PC-3 (cell line): ENCODE measurements at regions of chr1 and their contacts with region 1.

Region 1: DNA sequence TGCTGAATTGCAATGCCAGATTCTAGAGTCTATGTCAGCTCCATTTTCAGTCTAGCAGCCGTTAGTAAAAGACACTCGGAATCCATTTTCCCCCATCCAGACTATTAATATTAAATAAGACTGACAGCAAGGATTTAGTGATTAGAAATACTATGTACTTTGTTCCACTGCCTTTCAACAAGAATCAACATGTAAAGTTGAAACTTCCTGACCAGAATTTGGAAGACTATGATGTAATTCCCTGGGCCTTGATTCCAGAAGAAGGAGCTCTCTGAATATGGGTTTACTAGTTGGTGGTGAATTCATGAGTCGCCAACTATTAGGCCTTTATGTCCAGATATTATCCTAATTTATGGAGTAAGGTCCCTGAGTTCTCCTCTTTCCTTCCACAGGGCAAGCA is 24.8 kb downstream of the KDM1A start:
- DNase-seq: no peak
- ATAC-seq: no peak
- H3K4me3 ChIP-seq: no peak overlapping the region
- H3K27ac ChIP-seq: no peak overlapping the region
- H3K4me1 ChIP-seq: no peaks in the 10 kb centered on the region
- H3K27me3 ChIP-seq: no peaks in the 10 kb centered on the region
- CTCF ChIP-seq: no peak

Region 2: GRCh38 chr1:23019094-23019862 is 24.8 kb before region 1 on chr1 and contains the start of gene KDM1A:
- CTCF ChIA-PET with region 1: no interaction called
- POLR2A ChIA-PET with region 1: no interaction called
- intact Hi-C with region 1: loop called (anchors 2 kb)
- DNase-seq: peak; percentile 98
- ATAC-seq: peak; percentile 95
- H3K4me3 ChIP-seq: peak within 1 kb of the TSS; percentile 94
- H3K27ac ChIP-seq: peak within 1 kb of the TSS; percentile 79
- H3K4me1 ChIP-seq: peaks cover 24% of the 10 kb centered on the region; the same call in 1 of the 2 replicates
- H3K27me3 ChIP-seq: no peaks in the 10 kb centered on the region
- CTCF ChIP-seq: no peak
- total RNA-seq, gene KDM1A: 186 and 229 TPM in 2 replicates

Region 3: DNA sequence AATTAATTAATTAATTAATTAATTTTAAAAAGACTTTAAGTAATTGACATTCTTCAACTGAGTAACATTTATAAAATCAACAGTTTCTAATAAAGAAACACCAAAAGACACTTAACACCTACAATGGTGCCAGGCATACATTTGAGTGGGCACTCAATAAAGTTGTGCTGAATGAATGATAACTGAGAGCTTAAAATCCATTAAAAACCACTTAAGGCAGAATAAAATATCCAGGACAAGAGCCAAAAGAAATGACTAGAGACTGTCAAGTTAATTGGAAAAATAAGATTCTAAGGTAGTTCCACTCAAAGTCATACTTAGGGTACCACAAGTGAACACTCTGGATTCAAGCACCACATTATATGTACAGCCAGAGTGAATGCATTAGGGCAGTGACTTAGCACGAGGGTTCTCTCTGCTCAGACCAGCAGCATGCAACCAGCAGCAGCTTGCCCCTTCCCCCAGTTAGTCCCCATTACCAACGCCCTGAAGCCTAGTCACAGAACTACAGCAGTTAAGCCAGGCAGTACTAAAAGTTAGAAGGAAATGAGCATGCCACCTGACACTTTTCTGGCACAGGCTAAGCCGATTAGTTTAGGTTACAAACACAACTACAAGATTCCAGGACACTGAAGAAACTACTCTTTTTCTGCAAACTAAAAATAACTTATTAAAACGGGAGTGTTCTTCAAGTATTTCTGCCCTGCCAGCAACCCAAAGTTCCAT is 78.2 kb after region 1 on chr1:
- CTCF ChIA-PET with region 1: no interaction called
- POLR2A ChIA-PET with region 1: no interaction called
- intact Hi-C with region 1: no loop called
- DNase-seq: peak; percentile 14
- ATAC-seq: peak; percentile 31; the same call in 1 of the 2 replicates
- H3K4me3 ChIP-seq: no peak overlapping the region
- H3K27ac ChIP-seq: no peak overlapping the region
- H3K4me1 ChIP-seq: peaks cover 9% of the 10 kb centered on the region; the same call in 1 of the 2 replicates
- H3K27me3 ChIP-seq: no peaks in the 10 kb centered on the region
- CTCF ChIP-seq: no peak